Body of pancreas (tissue), 4 donors: ENCODE measurements at regions of chr16 and their contacts with region 1.

Region 1: DNA sequence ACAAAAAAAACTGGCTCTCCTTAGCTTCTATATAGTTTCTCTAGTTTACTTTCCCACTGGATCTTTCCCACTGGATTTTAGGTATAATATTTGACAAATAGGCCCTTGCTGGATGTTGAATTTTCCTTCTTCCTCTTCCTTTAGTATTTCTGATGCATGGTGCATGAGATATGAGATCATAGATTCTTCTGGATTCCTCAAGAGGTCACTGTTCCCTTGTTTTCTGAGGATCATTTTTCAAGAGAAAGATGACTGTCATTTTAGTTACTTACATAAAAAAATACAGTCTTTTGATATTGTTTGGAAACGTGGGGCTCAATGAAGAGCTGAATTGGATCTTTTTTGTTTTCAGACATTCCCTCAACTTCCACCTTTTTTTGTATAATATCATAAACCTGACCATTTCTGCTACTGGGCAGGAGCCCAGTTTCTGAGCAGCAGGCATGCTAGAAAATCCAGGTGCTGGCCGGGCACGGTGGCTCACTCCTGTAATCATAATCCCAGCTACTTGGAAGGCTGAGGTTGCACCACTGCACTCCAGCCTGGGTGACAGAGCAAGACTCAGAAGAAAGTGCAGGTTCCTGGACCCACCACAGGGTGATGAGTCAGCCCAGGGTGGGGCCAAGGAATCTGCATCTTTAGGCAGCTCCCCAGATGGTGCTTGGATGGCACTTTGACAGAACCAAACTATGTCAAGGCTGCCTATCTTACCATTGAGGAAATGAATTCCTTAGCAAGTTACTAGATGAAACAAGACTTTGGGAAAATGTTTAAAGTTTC is 70.3 kb downstream of the SDR42E1 start:
- DNase-seq: no peak
- ATAC-seq: peak; percentile 65
- H3K4me3 ChIP-seq: no peak overlapping the region
- H3K27ac ChIP-seq: no peak overlapping the region
- H3K4me1 ChIP-seq: peaks cover 4% of the 10 kb centered on the region
- H3K27me3 ChIP-seq: peaks cover 0 to 4% of the 10 kb centered on the region in 2 donors
- CTCF ChIP-seq: peak; percentile 40 to 76 (median 70)
- POLR2A ChIP-seq: no peak

Region 2: DNA sequence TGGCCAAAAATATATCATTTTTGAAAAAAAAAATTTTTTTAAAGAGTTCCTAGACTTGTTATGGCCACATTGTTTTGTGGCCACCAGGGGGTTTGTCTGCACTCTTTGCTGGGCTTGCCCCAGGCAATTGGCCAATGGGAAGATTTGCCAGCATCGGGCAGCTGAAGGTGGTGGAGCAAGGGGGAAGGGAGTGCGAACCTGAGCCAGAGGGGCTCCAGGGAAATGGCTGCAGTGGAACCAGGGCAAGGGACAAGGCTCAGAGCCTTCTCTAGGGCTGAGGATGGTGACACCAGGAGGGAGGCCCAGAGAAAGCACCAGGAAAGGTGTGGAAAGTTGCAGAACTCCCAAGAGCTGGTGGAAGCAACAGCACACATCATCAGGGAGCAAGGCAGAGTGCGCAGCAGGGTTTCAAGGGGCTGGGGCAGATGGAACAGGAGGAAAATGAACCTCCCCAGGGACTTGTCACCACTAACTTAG is 511.9 kb before region 1 on chr16:
- intact Hi-C with region 1: no loop called
- DNase-seq: peak; percentile 75 to 89 (median 82)
- ATAC-seq: peak; percentile 85
- H3K4me3 ChIP-seq: no peak overlapping the region
- H3K27ac ChIP-seq: no peak overlapping the region
- H3K4me1 ChIP-seq: peaks cover 7% of the 10 kb centered on the region
- H3K27me3 ChIP-seq: no peaks in the 10 kb centered on the region
- CTCF ChIP-seq: peak; percentile 56 to 75 (median 68)
- POLR2A ChIP-seq: no peak

Region 3: DNA sequence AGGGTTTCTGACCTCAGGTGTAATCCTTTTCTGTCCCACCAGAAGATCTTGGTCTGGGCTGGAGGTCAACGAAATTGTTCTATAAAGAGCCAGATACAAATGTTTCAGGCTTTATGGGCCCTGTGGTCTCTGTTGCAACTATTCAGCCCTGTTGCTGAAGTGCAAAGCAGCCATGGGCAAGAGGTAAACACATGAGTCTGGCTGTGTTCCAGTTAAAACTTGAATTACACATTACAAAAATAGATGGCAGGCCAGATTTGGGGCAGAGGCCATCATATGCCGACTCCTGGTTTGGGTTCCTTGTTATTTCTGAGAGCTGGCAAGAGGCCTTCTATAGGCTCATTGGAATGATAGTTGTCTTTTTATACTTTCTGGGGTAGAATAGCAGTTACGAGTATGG is 44.1 kb before region 1 on chr16:
- intact Hi-C with region 1: no loop called
- DNase-seq: no peak
- ATAC-seq: no peak
- H3K4me3 ChIP-seq: no peak overlapping the region
- H3K27ac ChIP-seq: no peak overlapping the region
- H3K4me1 ChIP-seq: no peaks in the 10 kb centered on the region
- H3K27me3 ChIP-seq: no peaks in the 10 kb centered on the region
- CTCF ChIP-seq: no peak
- POLR2A ChIP-seq: no peak

Region 4: GRCh38 chr16:82229796-82230619 is 289.0 kb after region 1 on chr16:
- intact Hi-C with region 1: loop called (anchors 5 kb)
- DNase-seq: peak; percentile 71 to 81 (median 76)
- ATAC-seq: peak; percentile 59
- H3K4me3 ChIP-seq: no peak overlapping the region
- H3K27ac ChIP-seq: no peak overlapping the region
- H3K4me1 ChIP-seq: no peaks in the 10 kb centered on the region
- H3K27me3 ChIP-seq: no peaks in the 10 kb centered on the region
- CTCF ChIP-seq: peak; percentile 70 to 91 (median 82)
- POLR2A ChIP-seq: no peak